AG04449 (cell line): ENCODE measurements at regions of chr20 and their contacts with region 1.

Region 1: DNA sequence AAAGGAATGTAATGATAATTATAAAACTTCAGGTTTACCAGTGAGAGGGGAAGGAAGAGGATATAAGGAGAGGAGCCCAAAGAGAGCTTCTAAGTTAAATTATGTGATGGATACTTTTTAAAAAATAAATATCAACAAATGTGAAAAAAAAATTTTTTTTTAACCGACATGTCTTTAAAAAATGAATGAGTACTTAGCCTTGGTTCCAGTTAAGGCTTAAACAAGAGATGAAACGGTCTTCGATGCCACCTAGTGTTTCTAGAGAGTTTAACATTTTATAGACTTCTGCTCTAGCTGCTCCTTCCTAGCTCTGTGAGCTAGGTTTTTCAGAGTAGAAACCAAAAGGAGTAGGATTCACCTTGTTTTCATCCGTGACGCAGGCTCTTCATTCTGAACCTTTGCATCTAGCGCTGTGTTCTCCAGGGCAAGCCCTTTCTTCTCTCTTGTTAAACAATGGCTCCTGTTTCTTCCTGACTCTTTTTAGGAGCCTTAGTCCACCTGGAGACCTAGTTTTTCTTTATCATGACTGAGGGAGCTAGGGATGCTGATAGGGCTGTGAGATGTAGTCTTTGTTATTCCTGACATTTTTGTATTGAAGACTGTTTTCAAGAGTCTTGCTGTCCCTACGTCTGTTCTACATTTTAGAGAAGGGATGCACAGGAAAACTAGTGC is 42.4 kb upstream of the GNRH2 start:
- DNase-seq: peak; percentile 24
- H3K4me3 ChIP-seq: no peak overlapping the region
- CTCF ChIP-seq: peak; percentile 35

Region 2: GRCh38 chr20:2688041-2688591 is 312.9 kb before region 1 on chr20:
- CTCF ChIA-PET with region 1: interaction called, 20 read pairs
- POLR2A ChIA-PET with region 1: no interaction called
- DNase-seq: peak; percentile 3
- H3K4me3 ChIP-seq: no peak overlapping the region
- CTCF ChIP-seq: peak; percentile 78

Region 3: GRCh38 chr20:2914160-2914559 is 86.8 kb before region 1 on chr20:
- CTCF ChIA-PET with region 1: interaction called, 12 read pairs
- POLR2A ChIA-PET with region 1: no interaction called
- DNase-seq: no peak
- H3K4me3 ChIP-seq: no peak overlapping the region
- CTCF ChIP-seq: no peak